Dorsolateral prefrontal cortex (tissue), 120 donors: ENCODE measurements at regions of chr11 and their contacts with region 1.

Region 1: GRCh38 chr11:113305440-113306336 is 8.7 kb upstream of the TTC12 start:
- DNase-seq: peak; percentile 78 to 90 (median 84)
- H3K4me3 ChIP-seq: peak overlapping the region in 2 of 59 donors; percentile 2 to 15
- H3K27ac ChIP-seq: no peak overlapping the region
- H3K27me3 ChIP-seq: no peaks in the 10 kb centered on the region
- CTCF ChIP-seq: peak; percentile 72 to 100 (median 96)

Region 2: DNA sequence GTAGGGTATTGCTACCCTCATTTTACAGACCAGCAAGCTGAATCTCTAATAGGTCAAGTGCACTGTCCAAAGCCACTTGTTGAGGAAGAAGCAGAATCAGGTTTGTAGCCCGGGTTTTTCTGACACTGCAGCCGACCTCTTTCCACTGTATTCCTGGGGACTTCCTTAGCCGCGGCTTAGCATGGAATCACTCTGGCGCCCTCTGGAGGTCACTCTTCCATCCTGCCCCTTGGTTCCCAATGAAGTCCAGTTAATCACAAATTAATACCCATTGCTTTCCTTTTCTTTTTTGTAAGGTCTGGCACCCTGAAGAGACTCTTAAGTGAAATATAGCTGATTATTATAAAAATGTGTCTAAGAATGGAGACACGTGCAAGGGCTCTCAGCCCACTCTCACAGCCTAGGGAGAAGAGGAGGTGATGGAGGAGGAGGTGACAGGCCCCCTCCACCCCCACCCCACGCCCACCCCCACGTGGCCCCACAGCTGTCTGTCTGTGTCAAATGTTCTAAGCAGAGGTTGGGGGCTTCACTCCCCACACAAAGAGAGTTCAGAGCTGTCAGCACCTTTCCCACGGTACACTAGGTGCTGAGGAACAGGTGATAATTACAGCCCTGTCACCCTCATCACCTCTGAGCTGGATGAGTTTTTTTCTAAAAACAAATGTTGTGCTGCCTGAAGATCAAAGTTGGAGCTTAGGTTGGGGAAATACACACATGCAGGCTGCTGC is 227.2 kb after region 1 on chr11:
- intact Hi-C with region 1: loop called (anchors 2 kb)
- DNase-seq: peak; percentile 73 to 89 (median 79)
- H3K4me3 ChIP-seq: no peak overlapping the region
- H3K27ac ChIP-seq: no peak overlapping the region
- H3K27me3 ChIP-seq: no peaks in the 10 kb centered on the region
- CTCF ChIP-seq: peak; percentile 62 to 96 (median 86)

Region 3: GRCh38 chr11:113730887-113731726 is 425.4 kb after region 1 on chr11:
- intact Hi-C with region 1: loop called (anchors 2 kb)
- DNase-seq: peak in 6 of 10 donors; percentile 32 to 73 (median 52)
- H3K4me3 ChIP-seq: no peak overlapping the region
- H3K27ac ChIP-seq: no peak overlapping the region
- H3K27me3 ChIP-seq: no peaks in the 10 kb centered on the region
- CTCF ChIP-seq: peak; percentile 7 to 92 (median 74)

Region 4: GRCh38 chr11:113796663-113797259 is 491.1 kb after region 1 on chr11:
- intact Hi-C with region 1: loop called in 1 of 2 experiments (anchors 5 kb)
- DNase-seq: peak in 2 of 10 donors; percentile 33 to 52
- H3K4me3 ChIP-seq: no peak overlapping the region
- H3K27ac ChIP-seq: peak overlapping the region in 8 of 59 donors; percentile 9 to 48 (median 34)
- H3K27me3 ChIP-seq: no peaks in the 10 kb centered on the region
- CTCF ChIP-seq: peak; percentile 48 to 81 (median 72)